ENCODE measurements at regions of chr4 and their contacts with region 1.

Region 1: GRCh38 chr4:182806259-182807252 is 110.6 kb downstream of the DCTD start:
- DNase-seq: peak; percentile 77
- H3K4me3 Mint-ChIP-seq: peak overlapping the region; percentile 72
- H3K27ac Mint-ChIP-seq: no peak overlapping the region
- H3K4me1 Mint-ChIP-seq: peaks cover 5% of the 10 kb centered on the region
- H3K27me3 Mint-ChIP-seq: peaks cover 4% of the 10 kb centered on the region

Region 2: GRCh38 chr4:182478475-182478874 is 328.1 kb before region 1 on chr4:
- CTCF ChIA-PET with region 1: interaction called, 3 read pairs
- POLR2A ChIA-PET with region 1: no interaction called
- intact Hi-C with region 1: loop called (anchors 1 kb)
- DNase-seq: no peak
- H3K4me3 Mint-ChIP-seq: no peak overlapping the region
- H3K27ac Mint-ChIP-seq: no peak overlapping the region
- H3K4me1 Mint-ChIP-seq: no peaks in the 10 kb centered on the region
- H3K27me3 Mint-ChIP-seq: peaks cover 10% of the 10 kb centered on the region

Region 3: DNA sequence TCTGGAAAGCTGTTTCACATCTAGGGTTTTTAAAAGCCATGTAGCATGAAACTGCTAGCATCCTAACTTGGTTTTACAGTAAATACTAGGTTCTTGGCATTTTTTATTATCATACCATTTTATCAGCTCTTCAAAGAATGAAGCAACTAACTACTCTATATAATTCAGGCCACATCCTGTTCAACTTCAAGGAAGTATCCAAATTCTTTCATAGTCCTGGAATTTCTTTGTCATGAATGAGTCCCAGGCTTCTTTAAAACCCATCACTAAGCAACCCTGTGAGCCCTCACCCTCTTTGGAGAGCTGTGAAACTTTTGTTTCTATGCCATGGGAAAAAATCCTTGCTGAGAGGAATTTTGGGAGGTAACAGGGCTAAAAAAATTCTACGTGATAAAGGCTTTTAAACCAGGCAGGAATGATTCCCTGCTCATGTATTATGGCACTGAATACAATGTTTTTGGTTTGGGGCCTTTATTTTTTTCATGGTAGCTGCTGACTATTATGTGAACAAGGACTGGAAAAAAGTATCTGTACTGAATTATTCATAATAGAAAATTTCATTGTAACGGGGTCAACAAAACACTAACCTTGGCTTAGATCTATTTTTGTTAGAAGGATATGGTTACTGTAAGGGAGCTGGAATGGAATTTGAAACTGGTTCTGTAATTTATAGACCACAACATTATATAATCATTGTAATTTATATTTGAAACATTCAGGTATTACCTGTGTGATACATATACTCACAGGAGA is 54.2 kb before region 1 on chr4:
- CTCF ChIA-PET with region 1: no interaction called
- POLR2A ChIA-PET with region 1: no interaction called
- intact Hi-C with region 1: no loop called
- DNase-seq: no peak
- H3K4me3 Mint-ChIP-seq: no peak overlapping the region
- H3K27ac Mint-ChIP-seq: no peak overlapping the region
- H3K4me1 Mint-ChIP-seq: no peaks in the 10 kb centered on the region
- H3K27me3 Mint-ChIP-seq: peaks cover 2% of the 10 kb centered on the region

Measured in activated CD4-positive, alpha-beta memory T cell treated with anti-CD3 and anti-CD28 coated beads for 36 hours (primary cell).